Activated B cell treated with CpG ODN at 0.5 μM for 24 hours (primary cell): ENCODE measurements at regions of chr1 and their contacts with region 1.

Region 1: GRCh38 chr1:110879758-110880606 is 7.0 kb downstream of the CD53 start:
- DNase-seq: no peak
- ATAC-seq: peak; percentile 79
- H3K4me3 Mint-ChIP-seq: peak overlapping the region; percentile 73
- H3K27ac Mint-ChIP-seq: peak overlapping the region; percentile 93
- H3K4me1 Mint-ChIP-seq: peaks cover 95% of the 10 kb centered on the region
- H3K27me3 Mint-ChIP-seq: no peaks in the 10 kb centered on the region
- CTCF ChIP-seq: no peak

Region 2: DNA sequence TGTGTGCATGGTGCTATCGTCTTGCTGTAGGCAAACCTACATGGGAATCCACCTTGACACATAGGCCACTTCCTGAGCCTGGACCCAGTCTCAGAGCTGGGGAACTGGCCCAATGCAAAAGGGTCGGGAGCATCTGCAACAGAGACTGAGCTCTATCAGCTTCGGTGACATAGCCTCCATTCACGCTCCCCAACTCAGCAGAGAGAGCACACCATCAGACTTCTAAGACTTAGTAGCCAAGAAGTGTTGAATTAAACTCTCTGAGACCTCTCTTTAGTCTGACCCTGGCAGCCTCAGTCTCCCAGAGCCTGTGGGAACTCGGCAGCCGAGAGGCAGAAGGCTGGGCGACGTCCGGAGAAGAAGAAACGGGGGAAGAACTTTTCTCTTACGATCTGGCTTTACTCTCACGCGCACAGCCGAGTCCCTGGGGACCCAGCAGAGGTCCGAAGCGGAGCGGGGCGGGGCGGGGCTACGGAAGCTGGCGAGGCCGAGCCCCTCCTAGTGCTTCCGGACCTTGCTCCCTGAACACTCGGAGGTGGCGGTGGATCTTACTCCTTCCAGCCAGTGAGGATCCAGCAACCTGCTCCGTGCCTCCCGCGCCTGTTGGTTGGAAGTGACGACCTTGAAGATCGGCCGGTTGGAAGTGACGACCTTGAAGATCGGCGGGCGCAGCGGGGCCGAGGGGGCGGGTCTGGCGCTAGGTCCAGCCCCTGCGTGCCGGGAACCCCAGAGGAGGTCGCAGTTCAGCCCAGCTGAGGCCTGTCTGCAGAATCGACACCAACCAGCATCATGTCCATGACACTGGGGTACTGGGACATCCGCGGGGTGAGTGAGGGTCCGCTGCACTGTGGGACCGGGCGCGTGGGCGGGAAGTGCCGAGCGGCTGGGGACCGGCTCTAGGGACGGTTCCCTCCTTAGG is 1224.1 kb before region 1 on chr1 and contains the start of gene GSTM4:
- CTCF ChIA-PET with region 1: no interaction called
- POLR2A ChIA-PET with region 1: no interaction called
- intact Hi-C with region 1: no loop called
- DNase-seq: peak; percentile 82
- ATAC-seq: peak; percentile 97
- H3K4me3 Mint-ChIP-seq: peak within 1 kb of the TSS; percentile 96
- H3K27ac Mint-ChIP-seq: peak within 1 kb of the TSS; percentile 94
- H3K4me1 Mint-ChIP-seq: peaks cover 24% of the 10 kb centered on the region
- H3K27me3 Mint-ChIP-seq: peaks cover 10% of the 10 kb centered on the region
- CTCF ChIP-seq: no peak
- total RNA-seq, gene GSTM4: 13.1 and 13.7 TPM in 2 replicates

Region 3: DNA sequence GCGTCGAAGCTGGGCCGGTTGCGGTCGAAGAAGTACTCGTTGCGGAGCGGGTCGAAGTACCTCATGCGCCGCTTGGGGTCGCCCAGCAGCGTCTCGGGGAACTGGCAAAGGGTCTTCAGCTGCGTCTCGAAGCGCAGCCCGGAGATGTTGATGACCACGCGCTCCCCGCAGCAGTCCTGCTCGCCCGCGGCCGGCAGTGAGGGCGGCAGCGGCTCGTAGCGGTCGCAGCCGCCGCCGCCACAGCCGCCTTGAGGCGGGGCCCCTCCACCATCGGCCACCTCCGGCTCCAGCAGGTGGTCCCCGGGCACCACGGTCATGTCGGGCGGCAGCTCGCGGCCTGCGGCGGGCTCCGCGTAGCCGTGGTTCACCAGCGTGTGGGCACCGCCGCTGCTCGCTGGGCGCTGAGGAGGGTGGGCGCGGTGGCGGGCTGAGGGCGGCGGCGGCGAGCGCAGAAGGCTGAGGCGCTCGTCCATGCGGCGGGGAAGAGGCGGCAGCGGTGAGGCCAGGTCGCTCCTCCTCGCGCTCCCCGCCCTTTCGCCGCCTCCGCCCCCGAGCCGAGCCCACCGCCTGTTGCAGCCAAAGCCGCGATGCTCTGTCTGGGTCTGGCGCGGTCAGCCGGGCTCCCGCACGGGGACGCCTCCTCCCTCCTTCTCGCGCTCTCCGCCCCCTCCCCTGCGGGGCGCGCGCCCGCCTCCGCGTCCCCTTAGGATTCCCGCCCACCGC is 205.5 kb before region 1 on chr1 and contains the start of gene KCNA3:
- CTCF ChIA-PET with region 1: interaction called, 4 read pairs
- POLR2A ChIA-PET with region 1: interaction called, 3 read pairs
- intact Hi-C with region 1: loop called (anchors 5 kb)
- DNase-seq: peak; percentile 68
- ATAC-seq: peak; percentile 62
- H3K4me3 Mint-ChIP-seq: peak within 1 kb of the TSS; percentile 90
- H3K27ac Mint-ChIP-seq: peak within 1 kb of the TSS; percentile 80
- H3K4me1 Mint-ChIP-seq: peaks cover 60% of the 10 kb centered on the region
- H3K27me3 Mint-ChIP-seq: no peaks in the 10 kb centered on the region
- CTCF ChIP-seq: no peak
- total RNA-seq, gene KCNA3: 15.0 and 20.0 TPM in 2 replicates

Region 4: GRCh38 chr1:110787328-110788071 is 92.5 kb before region 1 on chr1:
- CTCF ChIA-PET with region 1: interaction called, 44 read pairs
- POLR2A ChIA-PET with region 1: interaction called, 98 read pairs
- intact Hi-C with region 1: no loop called
- DNase-seq: peak; percentile 49
- ATAC-seq: peak; percentile 85
- H3K4me3 Mint-ChIP-seq: peak overlapping the region; percentile 70
- H3K27ac Mint-ChIP-seq: peak overlapping the region; percentile 95
- H3K4me1 Mint-ChIP-seq: peaks cover 70% of the 10 kb centered on the region
- H3K27me3 Mint-ChIP-seq: no peaks in the 10 kb centered on the region
- CTCF ChIP-seq: no peak

Region 5: DNA sequence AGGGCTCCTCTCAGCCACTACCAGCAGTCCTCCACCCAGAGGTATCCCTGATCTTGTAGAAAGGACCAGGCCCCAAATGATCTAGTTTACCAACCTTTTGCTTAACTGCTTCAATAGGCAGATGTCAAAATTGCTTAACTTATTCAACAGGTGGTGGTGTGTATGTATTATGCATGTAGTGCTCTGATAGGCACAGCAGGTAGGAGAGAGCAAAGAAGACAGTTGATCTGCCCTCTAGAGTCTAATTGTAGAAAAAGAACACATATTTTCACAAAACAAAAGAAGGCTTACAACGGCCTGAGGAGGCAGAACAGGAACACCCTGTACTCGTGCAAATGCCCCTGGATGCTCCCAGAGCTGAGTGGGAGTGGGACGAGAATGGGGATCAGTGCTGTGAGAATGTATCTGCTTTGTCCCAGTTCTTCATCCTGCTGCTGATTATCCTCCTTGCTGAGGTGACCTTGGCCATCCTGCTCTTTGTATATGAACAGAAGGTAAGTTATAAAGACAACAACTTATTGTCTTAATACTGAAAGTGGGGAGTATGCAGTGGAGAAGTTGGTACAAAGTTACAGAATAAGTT is 14.0 kb after region 1 on chr1:
- CTCF ChIA-PET with region 1: no interaction called
- POLR2A ChIA-PET with region 1: interaction called, 31 read pairs
- intact Hi-C with region 1: loop called (anchors 1 kb)
- DNase-seq: no peak
- ATAC-seq: peak; percentile 41
- H3K4me3 Mint-ChIP-seq: no peak overlapping the region
- H3K27ac Mint-ChIP-seq: peak overlapping the region; percentile 13
- H3K4me1 Mint-ChIP-seq: peaks cover 85% of the 10 kb centered on the region
- H3K27me3 Mint-ChIP-seq: no peaks in the 10 kb centered on the region
- CTCF ChIP-seq: no peak

Region 6: GRCh38 chr1:111203681-111204200 is 323.8 kb after region 1 on chr1:
- CTCF ChIA-PET with region 1: no interaction called
- POLR2A ChIA-PET with region 1: interaction called, 4 read pairs
- intact Hi-C with region 1: loop called (anchors 5 kb)
- DNase-seq: peak; percentile 80
- ATAC-seq: peak; percentile 59
- H3K4me3 Mint-ChIP-seq: peak overlapping the region; percentile 89
- H3K27ac Mint-ChIP-seq: peak overlapping the region; percentile 93
- H3K4me1 Mint-ChIP-seq: peaks cover 85% of the 10 kb centered on the region
- H3K27me3 Mint-ChIP-seq: no peaks in the 10 kb centered on the region
- CTCF ChIP-seq: no peak